ENCODE measurements at regions of chr4 and their contacts with region 1.

Region 1: GRCh38 chr4:2761035-2761923 is 5.1 kb upstream of the TNIP2 start:
- DNase-seq: peak; percentile 61
- H3K4me3 ChIP-seq: no peak overlapping the region
- H3K27ac ChIP-seq: no peak overlapping the region
- H3K4me1 ChIP-seq: peaks cover 8% of the 10 kb centered on the region
- H3K27me3 ChIP-seq: no peaks in the 10 kb centered on the region
- CTCF ChIP-seq: peak in 1 of 2 donors; percentile 32
- POLR2A ChIP-seq: no peak

Region 2: GRCh38 chr4:2721586-2721985 is 39.7 kb before region 1 on chr4:
- CTCF ChIA-PET with region 1: no interaction called
- POLR2A ChIA-PET with region 1: no interaction called
- dilution Hi-C with region 1: no loop called
- intact Hi-C with region 1: no loop called
- DNase-seq: no peak
- H3K4me3 ChIP-seq: no peak overlapping the region
- H3K27ac ChIP-seq: no peak overlapping the region
- H3K4me1 ChIP-seq: no peaks in the 10 kb centered on the region
- H3K27me3 ChIP-seq: no peaks in the 10 kb centered on the region
- CTCF ChIP-seq: no peak
- POLR2A ChIP-seq: no peak

Region 3: DNA sequence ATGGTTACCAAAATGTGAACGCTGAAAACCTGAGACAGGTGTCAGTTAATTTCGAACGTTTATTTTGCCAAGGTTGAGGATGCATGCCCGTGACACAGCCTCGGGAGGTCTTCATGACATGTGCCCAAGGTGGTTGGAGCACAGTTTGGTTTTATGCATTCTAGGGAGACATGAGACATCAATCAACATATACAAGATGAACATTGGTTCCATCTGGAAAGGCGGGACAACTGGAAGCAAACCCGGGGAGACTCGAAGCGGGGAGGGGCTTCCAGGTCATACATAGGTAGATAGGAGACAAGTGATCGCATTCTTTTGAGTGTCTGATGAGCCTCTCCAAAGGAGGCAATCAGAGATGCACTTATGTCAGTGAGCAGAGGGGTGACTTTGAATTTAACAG is 20.6 kb after region 1 on chr4:
- CTCF ChIA-PET with region 1: interaction called, 10 read pairs
- POLR2A ChIA-PET with region 1: no interaction called
- dilution Hi-C with region 1: no loop called
- intact Hi-C with region 1: no loop called
- DNase-seq: no peak
- H3K4me3 ChIP-seq: no peak overlapping the region
- H3K27ac ChIP-seq: no peak overlapping the region
- H3K4me1 ChIP-seq: no peaks in the 10 kb centered on the region
- H3K27me3 ChIP-seq: peaks cover 10 to 14% of the 10 kb centered on the region in 2 experiments
- CTCF ChIP-seq: no peak
- POLR2A ChIP-seq: no peak

Region 4: GRCh38 chr4:2811830-2812611 is 50.7 kb after region 1 on chr4:
- CTCF ChIA-PET with region 1: interaction called, 34 read pairs
- POLR2A ChIA-PET with region 1: no interaction called
- dilution Hi-C with region 1: no loop called
- intact Hi-C with region 1: loop called (anchors 5 kb)
- DNase-seq: peak; percentile 63
- H3K4me3 ChIP-seq: peak overlapping the region in 2 of 3 experiments; percentile 39 to 54
- H3K27ac ChIP-seq: peak overlapping the region; percentile 70
- H3K4me1 ChIP-seq: peaks cover 19% of the 10 kb centered on the region
- H3K27me3 ChIP-seq: no peaks in the 10 kb centered on the region
- CTCF ChIP-seq: no peak
- POLR2A ChIP-seq: peak; percentile 85

Region 5: GRCh38 chr4:2843263-2843940 is 82.1 kb after region 1 on chr4 and contains the start of gene ADD1:
- CTCF ChIA-PET with region 1: interaction called, 10 read pairs
- POLR2A ChIA-PET with region 1: no interaction called
- dilution Hi-C with region 1: no loop called
- intact Hi-C with region 1: loop called (anchors 2 kb)
- DNase-seq: peak; percentile 99
- H3K4me3 ChIP-seq: peak within 1 kb of the TSS; percentile 70 to 95 (median 84)
- H3K27ac ChIP-seq: peak within 1 kb of the TSS; percentile 70
- H3K4me1 ChIP-seq: peaks cover 22% of the 10 kb centered on the region
- H3K27me3 ChIP-seq: no peaks in the 10 kb centered on the region
- CTCF ChIP-seq: no peak
- POLR2A ChIP-seq: peak; percentile 85
- total RNA-seq, gene ADD1: 280 and 305 TPM in 2 replicates

Region 6: GRCh38 chr4:2902126-2902525 is 140.8 kb after region 1 on chr4:
- CTCF ChIA-PET with region 1: no interaction called
- POLR2A ChIA-PET with region 1: no interaction called
- dilution Hi-C with region 1: no loop called
- intact Hi-C with region 1: loop called (anchors 5 kb)
- DNase-seq: peak; percentile 59
- H3K4me3 ChIP-seq: no peak overlapping the region
- H3K27ac ChIP-seq: no peak overlapping the region
- H3K4me1 ChIP-seq: peaks cover 18% of the 10 kb centered on the region
- H3K27me3 ChIP-seq: no peaks in the 10 kb centered on the region
- CTCF ChIP-seq: no peak
- POLR2A ChIP-seq: no peak

Region 7: DNA sequence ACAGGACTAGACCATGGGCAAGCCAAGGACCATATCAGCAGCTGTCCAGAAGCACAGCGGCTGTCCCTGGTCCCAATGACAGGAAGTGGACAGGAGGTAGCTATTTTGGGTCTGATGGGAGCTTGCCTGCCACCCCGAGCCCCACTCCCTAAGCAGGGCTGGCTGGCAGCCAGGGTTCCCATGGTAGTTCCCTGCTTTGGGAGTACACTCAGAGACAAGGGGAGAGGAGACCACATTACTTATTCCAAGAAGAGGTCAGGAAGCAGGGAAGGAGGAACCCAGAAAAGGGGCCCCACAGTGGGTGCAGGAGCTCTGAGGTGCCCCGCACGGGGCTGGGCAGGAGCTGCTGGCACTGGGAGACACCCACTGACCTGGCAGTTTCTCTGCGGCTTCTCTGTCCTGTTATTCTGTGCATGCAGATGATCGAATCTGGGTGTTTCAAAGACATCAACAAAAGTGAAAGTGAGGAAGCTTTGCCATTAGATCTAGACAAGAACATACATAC is 276.7 kb after region 1 on chr4:
- CTCF ChIA-PET with region 1: interaction called, 3 read pairs
- POLR2A ChIA-PET with region 1: no interaction called
- dilution Hi-C with region 1: no loop called
- intact Hi-C with region 1: loop called (anchors 1 kb)
- DNase-seq: no peak
- H3K4me3 ChIP-seq: no peak overlapping the region
- H3K27ac ChIP-seq: no peak overlapping the region
- H3K4me1 ChIP-seq: peaks cover 7% of the 10 kb centered on the region
- H3K27me3 ChIP-seq: no peaks in the 10 kb centered on the region
- CTCF ChIP-seq: no peak
- POLR2A ChIP-seq: no peak

Measured in endothelial cell of umbilical vein (primary cell).